Activated naive CD4-positive, alpha-beta T cell treated with anti-CD3 and anti-CD28 coated beads for 36 hours (primary cell): ENCODE measurements at regions of chr11 and their contacts with region 1.

Region 1: GRCh38 chr11:107916671-107917241 is 11.5 kb upstream of the RAB39A start:
- DNase-seq: peak; percentile 43
- H3K4me3 Mint-ChIP-seq: no peak overlapping the region
- H3K27ac Mint-ChIP-seq: no peak overlapping the region
- H3K4me1 Mint-ChIP-seq: no peaks in the 10 kb centered on the region
- H3K27me3 Mint-ChIP-seq: peaks cover 2% of the 10 kb centered on the region

Region 2: DNA sequence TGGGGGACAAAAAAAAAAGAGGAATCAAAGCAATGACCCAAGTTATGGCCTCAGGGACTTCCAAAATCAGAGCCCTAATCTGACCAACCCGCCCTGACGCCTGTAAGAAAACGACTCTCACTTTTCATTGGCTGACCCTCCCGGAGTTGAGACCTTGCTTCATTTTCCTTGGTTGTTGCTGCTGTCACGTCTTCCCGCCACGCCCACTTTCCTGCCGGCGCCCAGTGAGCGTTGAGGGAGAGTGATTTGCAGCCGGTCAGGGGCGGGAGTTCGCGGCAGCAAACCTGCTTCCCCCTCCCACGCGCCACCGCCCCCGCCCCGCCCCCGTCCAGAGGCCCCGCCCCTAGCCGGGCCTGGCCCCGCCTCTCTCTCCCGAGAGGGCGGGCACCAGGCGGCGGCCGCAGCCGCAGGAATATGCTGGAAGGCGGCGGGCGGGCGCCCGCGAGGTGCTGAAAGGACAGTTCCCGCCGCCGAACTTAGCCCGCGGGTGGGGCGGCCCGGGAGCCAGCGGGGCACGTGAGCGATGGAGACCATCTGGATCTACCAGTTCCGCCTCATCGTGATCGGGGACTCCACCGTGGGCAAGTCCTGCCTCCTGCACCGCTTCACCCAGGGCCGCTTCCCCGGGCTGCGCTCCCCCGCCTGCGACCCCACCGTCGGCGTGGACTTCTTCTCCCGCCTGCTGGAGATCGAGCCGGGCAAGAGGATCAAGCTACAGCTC is 11.4 kb after region 1 on chr11 and contains the start of gene RAB39A:
- CTCF ChIA-PET with region 1: interaction called, 12 read pairs
- intact Hi-C with region 1: no loop called
- DNase-seq: peak; percentile 83
- H3K4me3 Mint-ChIP-seq: peak within 1 kb of the TSS; percentile 65
- H3K27ac Mint-ChIP-seq: no peak within 1 kb of the TSS
- H3K4me1 Mint-ChIP-seq: peaks cover 12% of the 10 kb centered on the region
- H3K27me3 Mint-ChIP-seq: peaks cover 44% of the 10 kb centered on the region
- total RNA-seq, gene RAB39A: not detected

Region 3: DNA sequence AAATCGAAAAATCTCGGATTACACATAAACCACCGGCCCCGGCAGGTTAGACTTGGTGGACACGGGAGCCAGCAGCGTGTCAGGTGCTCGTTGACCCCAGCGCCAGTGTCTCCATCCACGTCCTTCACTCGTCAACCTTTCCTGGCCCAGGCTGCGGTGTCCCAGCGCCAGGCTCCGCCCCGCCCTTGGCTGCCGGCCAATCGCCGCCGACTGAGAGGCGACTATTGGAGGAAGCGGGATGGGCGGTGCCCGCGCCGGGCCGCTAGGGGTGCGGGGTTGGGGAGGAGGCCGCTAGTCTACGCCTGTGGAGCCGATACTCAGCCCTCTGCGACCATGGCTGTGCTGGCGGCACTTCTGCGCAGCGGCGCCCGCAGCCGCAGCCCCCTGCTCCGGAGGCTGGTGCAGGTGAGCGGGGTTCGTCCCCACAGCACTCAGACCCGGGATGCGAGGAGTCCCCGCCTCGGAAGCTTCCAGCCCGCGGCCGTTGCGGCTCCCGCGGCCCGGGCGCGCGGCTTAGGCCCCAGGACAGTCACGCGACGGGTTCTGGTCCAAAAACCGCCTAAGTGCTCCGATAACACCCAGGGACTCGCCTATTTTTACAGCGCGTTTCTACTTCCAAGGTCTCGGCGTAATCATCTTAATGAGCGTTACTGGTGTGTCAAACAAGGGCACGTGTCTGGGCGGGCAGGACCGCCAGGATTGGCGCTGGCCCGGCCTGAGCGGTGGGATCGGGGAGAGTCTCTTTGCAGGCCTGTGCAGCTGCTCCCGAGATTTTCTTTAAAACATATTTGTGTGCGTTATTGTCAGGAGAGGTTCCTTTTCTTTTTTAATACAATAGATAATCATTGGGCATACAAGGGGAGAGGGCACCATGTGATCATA is 204.8 kb after region 1 on chr11 and contains the start of gene ACAT1:
- CTCF ChIA-PET with region 1: no interaction called
- intact Hi-C with region 1: no loop called
- DNase-seq: peak; percentile 96
- H3K4me3 Mint-ChIP-seq: peak within 1 kb of the TSS; percentile 85
- H3K27ac Mint-ChIP-seq: peak within 1 kb of the TSS; percentile 16
- H3K4me1 Mint-ChIP-seq: peaks cover 40% of the 10 kb centered on the region
- H3K27me3 Mint-ChIP-seq: no peaks in the 10 kb centered on the region
- total RNA-seq, gene ACAT1: 54.9 to 55.0 TPM

Region 4: GRCh38 chr11:108654994-108655631 is 738.4 kb after region 1 on chr11:
- CTCF ChIA-PET with region 1: interaction called, 4 read pairs
- intact Hi-C with region 1: loop called (anchors 1 kb)
- DNase-seq: peak; percentile 72
- H3K4me3 Mint-ChIP-seq: no peak overlapping the region
- H3K27ac Mint-ChIP-seq: no peak overlapping the region
- H3K4me1 Mint-ChIP-seq: no peaks in the 10 kb centered on the region
- H3K27me3 Mint-ChIP-seq: no peaks in the 10 kb centered on the region